Activated naive CD4-positive, alpha-beta T cell treated with anti-CD3 and anti-CD28 coated beads for 36 hours (primary cell): ENCODE measurements at regions of chr17 and their contacts with region 1.

Region 1: GRCh38 chr17:44210342-44211192 is 8.9 kb downstream of the UBTF start:
- DNase-seq: peak; percentile 93
- H3K4me3 Mint-ChIP-seq: peak overlapping the region; percentile 62
- H3K27ac Mint-ChIP-seq: peak overlapping the region; percentile 92
- H3K4me1 Mint-ChIP-seq: peaks cover 68% of the 10 kb centered on the region
- H3K27me3 Mint-ChIP-seq: no peaks in the 10 kb centered on the region

Region 2: DNA sequence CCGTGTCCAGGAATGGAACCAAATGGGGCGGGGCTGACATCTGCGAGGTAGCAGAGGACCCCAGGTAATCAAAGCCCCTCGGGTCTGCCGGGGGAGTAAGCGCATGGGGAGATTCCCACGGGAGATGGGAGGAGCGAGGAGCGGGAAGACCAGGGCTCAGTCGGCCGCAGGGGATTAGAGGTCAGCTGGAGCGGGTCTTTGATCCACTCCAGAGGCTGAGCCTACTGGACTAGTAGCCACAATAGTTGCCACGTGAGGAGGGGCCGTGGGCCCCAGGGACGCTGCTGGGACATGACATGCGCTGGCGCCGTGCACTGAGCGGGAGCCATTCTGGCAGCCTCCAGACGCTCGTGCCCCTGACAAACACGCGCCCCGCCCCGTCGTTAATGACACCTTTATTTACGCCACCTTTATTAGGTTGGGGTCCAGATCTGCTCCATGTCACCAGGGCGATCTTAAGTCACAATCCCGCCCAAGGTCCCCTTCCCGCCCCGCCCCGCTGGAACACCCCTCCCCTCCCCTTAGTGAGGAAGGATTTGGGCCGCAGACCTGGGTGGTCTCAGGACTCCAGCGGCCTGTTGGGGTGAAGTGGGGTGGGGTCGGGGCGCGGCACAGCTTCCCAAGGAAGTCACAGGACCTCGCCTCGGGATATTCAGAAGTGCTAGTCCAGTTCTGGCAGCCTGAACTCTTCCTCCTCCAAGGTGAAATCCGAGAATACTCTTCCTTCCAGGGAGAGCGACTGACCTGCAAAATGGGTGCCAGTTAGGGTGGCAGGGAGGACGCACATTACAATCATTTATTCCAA is 283.3 kb before region 1 on chr17:
- CTCF ChIA-PET with region 1: no interaction called
- intact Hi-C with region 1: no loop called
- DNase-seq: peak; percentile 44
- H3K4me3 Mint-ChIP-seq: peak overlapping the region; percentile 71
- H3K27ac Mint-ChIP-seq: peak overlapping the region; percentile 10
- H3K4me1 Mint-ChIP-seq: peaks cover 23% of the 10 kb centered on the region
- H3K27me3 Mint-ChIP-seq: no peaks in the 10 kb centered on the region

Region 3: GRCh38 chr17:44186307-44187130 is 24.0 kb before region 1 on chr17 and contains the start of gene TMUB2:
- CTCF ChIA-PET with region 1: interaction called, 10 read pairs
- intact Hi-C with region 1: loop called (anchors 2 kb)
- DNase-seq: peak; percentile 100
- H3K4me3 Mint-ChIP-seq: peak within 1 kb of the TSS; percentile 100
- H3K27ac Mint-ChIP-seq: peak within 1 kb of the TSS; percentile 99
- H3K4me1 Mint-ChIP-seq: peaks cover 43% of the 10 kb centered on the region
- H3K27me3 Mint-ChIP-seq: no peaks in the 10 kb centered on the region
- total RNA-seq, gene TMUB2: 21.2 to 22.9 TPM

Region 4: DNA sequence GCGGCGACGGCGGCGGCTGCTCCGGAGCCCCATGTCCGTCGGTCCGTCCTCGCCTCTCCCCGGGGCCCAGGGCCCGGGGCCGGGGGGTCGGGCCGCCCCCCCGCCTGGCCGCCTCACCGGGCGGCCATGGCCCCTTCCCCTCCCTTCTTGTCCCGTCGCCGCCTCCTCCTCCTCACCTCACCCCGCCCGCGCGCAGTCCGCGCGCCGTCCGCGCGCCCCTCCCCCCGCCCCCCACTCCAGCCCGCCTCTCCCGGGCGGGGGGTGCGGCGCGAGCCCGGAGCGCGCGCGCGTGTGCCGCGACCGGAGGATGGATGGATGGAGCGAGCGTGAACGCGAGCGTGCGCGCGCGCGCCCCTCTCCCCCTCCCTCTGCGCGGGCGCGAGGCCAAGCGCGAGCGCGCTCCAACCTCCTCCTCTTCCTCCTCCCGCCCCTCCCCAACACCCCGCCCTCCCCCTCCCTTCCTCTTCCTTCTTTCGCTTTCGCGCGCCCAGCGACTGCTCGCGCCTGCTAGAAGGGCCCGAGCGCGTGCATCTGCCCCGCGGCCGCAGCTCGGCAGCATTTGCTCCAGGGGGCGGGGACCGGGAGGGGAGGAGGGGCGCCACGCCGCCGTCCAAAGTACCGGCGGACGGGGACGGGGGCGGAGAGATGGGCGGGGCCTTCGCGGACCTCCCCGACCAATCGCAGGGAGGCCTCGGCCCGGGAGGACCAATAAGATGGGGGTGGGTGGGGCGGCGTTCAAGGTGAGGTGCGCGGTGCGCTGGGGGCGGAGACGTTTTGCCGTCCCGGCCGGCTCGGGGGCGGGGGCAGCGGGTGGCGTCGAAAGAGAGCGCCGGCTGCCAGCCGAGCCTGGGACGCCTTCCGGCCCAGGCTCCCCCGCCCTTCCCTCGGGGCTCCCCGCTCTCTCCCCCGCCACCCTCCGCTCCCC is 10.8 kb before region 1 on chr17 and contains the start of gene ATXN7L3:
- CTCF ChIA-PET with region 1: interaction called, 32 read pairs
- intact Hi-C with region 1: loop called (anchors 1 kb)
- DNase-seq: peak; percentile 100
- H3K4me3 Mint-ChIP-seq: peak within 1 kb of the TSS; percentile 86
- H3K27ac Mint-ChIP-seq: peak within 1 kb of the TSS; percentile 91
- H3K4me1 Mint-ChIP-seq: peaks cover 36% of the 10 kb centered on the region
- H3K27me3 Mint-ChIP-seq: no peaks in the 10 kb centered on the region
- total RNA-seq, gene ATXN7L3: 53.3 to 53.9 TPM

Region 5: GRCh38 chr17:44324571-44325275 is 114.2 kb after region 1 on chr17 and contains the start of gene SLC25A39:
- CTCF ChIA-PET with region 1: interaction called, 64 read pairs
- intact Hi-C with region 1: loop called (anchors 2 kb)
- DNase-seq: peak; percentile 93
- H3K4me3 Mint-ChIP-seq: peak within 1 kb of the TSS; percentile 87
- H3K27ac Mint-ChIP-seq: peak within 1 kb of the TSS; percentile 87
- H3K4me1 Mint-ChIP-seq: peaks cover 30% of the 10 kb centered on the region
- H3K27me3 Mint-ChIP-seq: no peaks in the 10 kb centered on the region
- total RNA-seq, gene SLC25A39: 146 to 149 TPM

Region 6: GRCh38 chr17:44331249-44331760 is 120.7 kb after region 1 on chr17:
- CTCF ChIA-PET with region 1: interaction called, 64 read pairs
- intact Hi-C with region 1: loop called (anchors 1 kb)
- DNase-seq: peak; percentile 87
- H3K4me3 Mint-ChIP-seq: no peak overlapping the region
- H3K27ac Mint-ChIP-seq: no peak overlapping the region
- H3K4me1 Mint-ChIP-seq: peaks cover 14% of the 10 kb centered on the region
- H3K27me3 Mint-ChIP-seq: no peaks in the 10 kb centered on the region

Region 7: DNA sequence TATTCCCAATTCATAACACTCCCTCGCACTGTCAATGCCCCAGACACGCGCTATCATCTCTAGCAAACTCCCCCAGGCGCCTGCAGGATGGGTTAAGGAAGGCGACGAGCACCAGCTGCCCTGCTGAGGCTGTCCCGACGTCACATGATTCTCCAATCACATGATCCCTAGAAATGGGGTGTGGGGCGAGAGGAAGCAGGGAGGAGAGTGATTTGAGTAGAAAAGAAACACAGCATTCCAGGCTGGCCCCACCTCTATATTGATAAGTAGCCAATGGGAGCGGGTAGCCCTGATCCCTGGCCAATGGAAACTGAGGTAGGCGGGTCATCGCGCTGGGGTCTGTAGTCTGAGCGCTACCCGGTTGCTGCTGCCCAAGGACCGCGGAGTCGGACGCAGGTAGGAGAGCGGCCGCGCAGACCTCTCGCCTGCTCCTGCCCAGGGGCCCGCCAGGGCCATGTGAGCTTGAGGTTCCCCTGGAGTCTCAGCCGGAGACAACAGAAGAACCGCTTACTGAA is 134.4 kb after region 1 on chr17 and contains the start of gene GRN:
- CTCF ChIA-PET with region 1: interaction called, 21 read pairs
- intact Hi-C with region 1: loop called (anchors 1 kb)
- DNase-seq: peak; percentile 93
- H3K4me3 Mint-ChIP-seq: peak within 1 kb of the TSS; percentile 73
- H3K27ac Mint-ChIP-seq: peak within 1 kb of the TSS; percentile 43
- H3K4me1 Mint-ChIP-seq: peaks cover 10% of the 10 kb centered on the region
- H3K27me3 Mint-ChIP-seq: no peaks in the 10 kb centered on the region
- total RNA-seq, gene GRN: 47.1 to 50.5 TPM

Region 8: GRCh38 chr17:44350733-44351226 is 140.2 kb after region 1 on chr17:
- CTCF ChIA-PET with region 1: interaction called, 21 read pairs
- intact Hi-C with region 1: loop called (anchors 1 kb)
- DNase-seq: peak; percentile 81
- H3K4me3 Mint-ChIP-seq: no peak overlapping the region
- H3K27ac Mint-ChIP-seq: no peak overlapping the region
- H3K4me1 Mint-ChIP-seq: peaks cover 8% of the 10 kb centered on the region
- H3K27me3 Mint-ChIP-seq: peaks cover 3% of the 10 kb centered on the region